IMR-90 (cell line): ENCODE measurements at regions of chr7 and their contacts with region 1.

Region 1: GRCh38 chr7:121530227-121531174 is 134.4 kb upstream of the FAM3C start:
- DNase-seq: peak; percentile 81
- ATAC-seq: peak; percentile 85
- H3K4me3 ChIP-seq: no peak overlapping the region
- H3K27ac ChIP-seq: no peak overlapping the region
- H3K4me1 ChIP-seq: no peaks in the 10 kb centered on the region; the same call in 1 of the 2 replicates
- H3K27me3 ChIP-seq: peaks cover 3% of the 10 kb centered on the region; the same call in 1 of the 2 replicates
- CTCF ChIP-seq: no peak
- POLR2A ChIP-seq: no peak
- RAD21 ChIP-seq: no peak

Region 2: GRCh38 chr7:121541457-121541856 is 11.0 kb after region 1 on chr7:
- CTCF ChIA-PET with region 1: interaction called, 10 read pairs
- POLR2A ChIA-PET with region 1: no interaction called
- dilution Hi-C with region 1: no loop called
- in situ Hi-C with region 1: no loop called
- intact Hi-C with region 1: loop called (anchors 1 kb)
- DNase-seq: no peak
- ATAC-seq: no peak
- H3K4me3 ChIP-seq: no peak overlapping the region
- H3K27ac ChIP-seq: no peak overlapping the region
- H3K4me1 ChIP-seq: 0 out of 2 replicates have a peak, but pooled peaks cover 2% of the 10 kb centered on the region
- H3K27me3 ChIP-seq: peaks cover 5% of the 10 kb centered on the region; the same call in 1 of the 2 replicates
- CTCF ChIP-seq: no peak
- POLR2A ChIP-seq: no peak
- RAD21 ChIP-seq: no peak

Region 3: DNA sequence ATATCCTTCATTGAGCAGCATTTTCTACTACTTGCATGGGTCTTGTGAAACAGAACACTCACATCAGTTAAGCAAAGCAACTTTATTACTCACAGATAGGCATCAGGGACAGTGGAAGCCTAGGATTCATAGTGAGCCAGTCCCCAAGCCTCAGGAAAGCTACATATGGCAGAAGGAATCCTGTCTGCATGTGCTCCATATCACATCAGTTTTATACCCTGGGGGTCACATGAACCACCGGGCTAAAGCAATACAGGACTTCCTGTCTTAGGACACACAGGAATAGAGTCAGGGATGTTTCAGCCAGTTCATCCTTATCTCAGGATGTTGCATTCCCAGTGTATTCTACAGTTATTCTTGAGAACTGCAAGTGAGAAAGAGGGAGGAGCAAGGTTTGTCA is 758.9 kb after region 1 on chr7:
- CTCF ChIA-PET with region 1: no interaction called
- POLR2A ChIA-PET with region 1: no interaction called
- dilution Hi-C with region 1: no loop called
- in situ Hi-C with region 1: no loop called
- intact Hi-C with region 1: no loop called
- DNase-seq: no peak
- ATAC-seq: no peak
- H3K4me3 ChIP-seq: no peak overlapping the region
- H3K27ac ChIP-seq: no peak overlapping the region
- H3K4me1 ChIP-seq: no peaks in the 10 kb centered on the region
- H3K27me3 ChIP-seq: no peaks in the 10 kb centered on the region
- CTCF ChIP-seq: no peak
- POLR2A ChIP-seq: no peak
- RAD21 ChIP-seq: no peak